Caco-2 (cell line): ENCODE measurements at regions of chr1 and their contacts with region 1.

Region 1: DNA sequence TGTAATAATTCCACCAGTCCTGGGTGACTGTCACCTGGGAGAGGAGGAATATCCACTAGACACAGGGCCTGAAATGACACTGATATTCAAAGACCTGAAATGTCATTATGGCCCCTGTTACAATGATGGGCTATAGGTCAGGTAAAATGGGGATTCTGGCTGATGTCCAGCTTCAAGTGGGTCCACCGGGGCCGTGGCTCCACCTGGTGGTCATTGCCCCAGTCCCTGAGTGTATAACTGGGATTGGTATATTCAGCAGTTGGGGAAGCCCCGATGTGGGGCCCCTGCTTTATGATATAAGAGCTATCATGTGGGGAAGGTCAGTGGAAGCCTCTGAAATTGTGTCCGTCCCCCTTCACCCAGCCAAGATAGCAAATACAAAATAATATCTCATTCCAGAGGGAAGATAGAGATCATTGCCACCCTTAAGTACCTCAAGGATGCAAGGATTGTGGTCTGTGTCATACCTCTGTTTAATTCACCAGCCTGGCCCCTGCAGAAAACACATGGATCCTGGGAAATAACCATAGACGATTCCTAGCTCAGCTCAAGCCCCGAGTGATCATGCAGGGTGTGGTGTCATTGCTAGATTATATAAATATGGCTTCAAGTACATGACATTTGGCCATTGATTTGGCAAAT is 19.4 kb downstream of the PLEKHO1 start:
- DNase-seq: peak; percentile 71 to 80
- H3K4me3 ChIP-seq: no peak overlapping the region
- H3K4me3 Mint-ChIP-seq: no peak overlapping the region
- H3K27ac Mint-ChIP-seq: no peak overlapping the region
- H3K4me1 ChIP-seq: peaks cover 25% of the 10 kb centered on the region
- H3K4me1 Mint-ChIP-seq: peaks cover 22% of the 10 kb centered on the region
- H3K27me3 ChIP-seq: no peaks in the 10 kb centered on the region
- H3K27me3 Mint-ChIP-seq: no peaks in the 10 kb centered on the region
- CTCF ChIP-seq: peak; percentile 74 to 87

Region 2: DNA sequence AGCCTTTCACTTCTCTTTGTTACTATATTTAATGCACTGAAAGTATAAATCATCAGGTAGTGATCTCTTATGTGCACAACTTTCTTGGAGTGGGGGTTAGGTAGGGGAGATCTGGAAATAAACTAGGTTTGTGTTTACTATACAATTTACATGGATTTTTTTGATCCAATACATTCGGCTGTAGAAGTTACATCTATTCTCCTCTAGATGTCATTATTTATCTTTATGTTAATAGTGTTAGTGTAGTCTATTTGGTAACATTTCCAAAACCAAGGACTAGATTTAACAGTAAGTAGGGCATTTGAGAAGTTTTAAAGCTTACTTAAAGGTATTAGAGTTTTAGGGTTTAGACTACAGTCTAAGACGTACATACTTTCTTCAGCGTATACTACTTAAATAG is 96.1 kb before region 1 on chr1:
- CTCF ChIA-PET with region 1: interaction called, 4 read pairs
- POLR2A ChIA-PET with region 1: no interaction called
- intact Hi-C with region 1: loop called (anchors 1 kb)
- DNase-seq: no peak
- H3K4me3 ChIP-seq: no peak overlapping the region
- H3K4me3 Mint-ChIP-seq: no peak overlapping the region
- H3K27ac Mint-ChIP-seq: no peak overlapping the region
- H3K4me1 ChIP-seq: no peaks in the 10 kb centered on the region
- H3K4me1 Mint-ChIP-seq: peaks cover 7% of the 10 kb centered on the region
- H3K27me3 ChIP-seq: no peaks in the 10 kb centered on the region
- H3K27me3 Mint-ChIP-seq: no peaks in the 10 kb centered on the region
- CTCF ChIP-seq: peak in 1 of 2 experiments; percentile 20

Region 3: DNA sequence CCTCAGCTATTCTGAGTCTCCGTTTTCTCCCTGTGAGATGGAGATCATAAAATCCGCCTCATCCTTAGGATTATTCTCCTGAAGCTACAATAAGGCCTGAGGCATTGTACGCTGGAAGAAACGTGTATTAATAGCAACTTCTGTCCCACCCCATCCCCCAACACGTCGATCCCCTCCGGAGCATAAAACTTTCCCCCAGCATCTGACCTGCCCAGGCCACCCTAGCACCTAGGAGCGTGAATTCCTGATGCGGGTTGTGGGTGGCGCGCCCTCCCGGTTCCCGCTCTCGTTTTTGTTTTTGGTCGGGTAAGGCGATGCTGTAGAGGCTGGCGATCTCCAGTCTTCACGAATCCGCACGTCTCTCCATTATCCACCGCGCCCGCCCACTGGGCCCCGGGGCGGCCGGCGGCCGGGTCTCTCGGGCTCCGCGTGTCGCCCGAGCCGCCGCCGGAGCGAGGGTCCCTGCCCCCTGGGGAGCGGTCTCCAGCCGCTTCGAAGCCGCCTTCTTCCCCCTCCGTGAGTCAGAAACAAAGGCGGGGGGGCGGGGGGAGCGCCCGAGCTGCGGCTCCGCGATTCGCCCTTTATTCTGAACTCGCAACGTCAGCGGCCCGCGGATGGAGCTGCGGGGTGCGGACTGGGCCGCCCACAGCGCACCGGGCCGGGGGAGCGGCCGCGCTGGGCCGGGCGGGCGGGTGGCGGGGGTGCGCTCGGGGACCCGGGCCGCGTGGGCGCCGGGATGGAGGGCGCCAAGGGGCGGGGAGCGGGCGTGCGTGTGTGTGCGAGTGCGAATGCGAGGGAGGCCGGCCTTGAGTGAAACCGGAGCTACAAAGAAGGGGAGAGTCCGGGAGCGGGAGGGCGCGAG is 19.6 kb before region 1 on chr1 and contains the start of gene PLEKHO1:
- CTCF ChIA-PET with region 1: no interaction called
- POLR2A ChIA-PET with region 1: no interaction called
- intact Hi-C with region 1: loop called (anchors 1 kb)
- DNase-seq: peak in 1 of 2 experiments; percentile 43
- H3K4me3 ChIP-seq: peak within 1 kb of the TSS; percentile 52
- H3K4me3 Mint-ChIP-seq: peak within 1 kb of the TSS; percentile 74
- H3K27ac Mint-ChIP-seq: no peak within 1 kb of the TSS
- H3K4me1 ChIP-seq: no peaks in the 10 kb centered on the region
- H3K4me1 Mint-ChIP-seq: no peaks in the 10 kb centered on the region
- H3K27me3 ChIP-seq: peaks cover 2% of the 10 kb centered on the region
- H3K27me3 Mint-ChIP-seq: peaks cover 2% of the 10 kb centered on the region
- CTCF ChIP-seq: no peak
- total RNA-seq, gene PLEKHO1: 2.1 and 3.6 TPM in 2 replicates